Heart left ventricle (tissue), 16 donors: ENCODE measurements at regions of chr1 and their contacts with region 1.

Region 1: GRCh38 chr1:23867953-23868556 is at the start of gene FUCA1:
- DNase-seq: peak; percentile 92 to 95 (median 94)
- ATAC-seq: peak; percentile 95 to 99 (median 99)
- H3K4me3 ChIP-seq: peak within 1 kb of the TSS; percentile 62 to 98 (median 84)
- H3K27ac ChIP-seq: peak within 1 kb of the TSS; percentile 37 to 83 (median 74)
- H3K4me1 ChIP-seq: peaks cover 0 to 48% (median 23%) of the 10 kb centered on the region in 12 donors
- H3K27me3 ChIP-seq: no peaks in the 10 kb centered on the region
- CTCF ChIP-seq: peak; percentile 89 to 99 (median 94)
- POLR2A ChIP-seq: peak in 1 of 2 donors; percentile 82
- total RNA-seq, gene FUCA1: 12.8 to 54.2 (median 16.1) TPM

Region 2: GRCh38 chr1:23772049-23772853 is 95.8 kb before region 1 on chr1:
- intact Hi-C with region 1: loop called in 8 of 10 experiments (anchors 5 to 10 kb)
- DNase-seq: peak; percentile 82 to 91 (median 86)
- ATAC-seq: peak; percentile 29 to 86 (median 82)
- H3K4me3 ChIP-seq: no peak overlapping the region
- H3K27ac ChIP-seq: no peak overlapping the region
- H3K4me1 ChIP-seq: peaks cover 0 to 41% (median 16%) of the 10 kb centered on the region in 12 donors
- H3K27me3 ChIP-seq: no peaks in the 10 kb centered on the region
- CTCF ChIP-seq: peak; percentile 84 to 94 (median 92)
- POLR2A ChIP-seq: no peak

Region 3: DNA sequence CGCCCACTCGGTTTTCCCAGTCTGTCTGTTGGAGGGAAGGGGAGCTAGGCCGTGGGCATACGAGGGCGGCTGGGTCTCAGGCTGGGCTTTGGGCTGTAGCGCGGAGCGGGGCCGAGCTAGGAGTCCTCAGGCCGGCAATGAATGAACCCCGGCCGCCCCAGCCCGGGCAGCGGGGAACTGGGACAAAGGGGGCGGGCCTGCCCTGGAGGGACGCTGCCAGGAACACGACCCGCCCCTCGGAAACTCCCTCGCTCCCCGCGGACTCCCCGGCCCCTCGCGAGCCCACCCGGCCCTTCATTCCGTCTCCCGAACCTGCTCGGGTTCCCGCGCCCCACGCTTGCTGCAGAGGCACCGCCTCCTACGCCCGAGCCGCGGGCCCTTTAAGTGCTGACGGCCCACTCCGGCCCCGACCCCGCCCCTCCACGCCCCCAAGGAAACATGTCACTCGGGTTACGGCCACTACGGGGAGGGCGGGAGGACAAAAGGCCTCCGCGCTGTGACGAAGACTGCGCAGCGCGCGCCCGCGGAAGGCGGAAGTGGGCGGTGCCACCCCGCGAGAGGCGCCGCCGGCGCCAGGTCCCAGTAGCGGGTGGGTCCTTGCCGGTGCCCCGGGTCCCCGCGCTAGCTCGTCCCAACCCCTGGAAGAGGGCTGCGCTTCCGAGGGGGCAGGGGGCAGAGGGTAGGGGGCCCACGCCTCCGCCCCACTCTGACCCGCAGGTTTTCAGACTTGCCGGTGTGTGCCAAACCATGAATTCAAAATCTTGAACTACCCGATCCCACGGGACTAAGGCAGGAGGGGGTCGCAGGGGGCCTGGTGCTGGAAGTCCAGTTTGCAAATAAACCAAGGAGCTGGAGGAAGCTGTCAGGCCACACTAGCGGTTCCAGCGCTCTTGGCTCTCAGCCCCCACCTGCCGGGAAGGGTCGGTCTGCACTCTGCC is 67.4 kb before region 1 on chr1 and contains the start of gene GALE:
- intact Hi-C with region 1: loop called in 2 of 10 experiments (anchors 10 kb)
- DNase-seq: peak; percentile 98 to 99 (median 98)
- ATAC-seq: peak; percentile 95 to 97 (median 96)
- H3K4me3 ChIP-seq: peak within 1 kb of the TSS; percentile 64 to 97 (median 80)
- H3K27ac ChIP-seq: peak within 1 kb of the TSS; percentile 84 to 97 (median 93)
- H3K4me1 ChIP-seq: peaks cover 3 to 23% (median 20%) of the 10 kb centered on the region in 12 donors
- H3K27me3 ChIP-seq: no peaks in the 10 kb centered on the region
- CTCF ChIP-seq: no peak
- POLR2A ChIP-seq: peak in 1 of 2 donors; percentile 80
- total RNA-seq, gene GALE: 6.2 to 13.8 (median 8.9) TPM

Region 4: DNA sequence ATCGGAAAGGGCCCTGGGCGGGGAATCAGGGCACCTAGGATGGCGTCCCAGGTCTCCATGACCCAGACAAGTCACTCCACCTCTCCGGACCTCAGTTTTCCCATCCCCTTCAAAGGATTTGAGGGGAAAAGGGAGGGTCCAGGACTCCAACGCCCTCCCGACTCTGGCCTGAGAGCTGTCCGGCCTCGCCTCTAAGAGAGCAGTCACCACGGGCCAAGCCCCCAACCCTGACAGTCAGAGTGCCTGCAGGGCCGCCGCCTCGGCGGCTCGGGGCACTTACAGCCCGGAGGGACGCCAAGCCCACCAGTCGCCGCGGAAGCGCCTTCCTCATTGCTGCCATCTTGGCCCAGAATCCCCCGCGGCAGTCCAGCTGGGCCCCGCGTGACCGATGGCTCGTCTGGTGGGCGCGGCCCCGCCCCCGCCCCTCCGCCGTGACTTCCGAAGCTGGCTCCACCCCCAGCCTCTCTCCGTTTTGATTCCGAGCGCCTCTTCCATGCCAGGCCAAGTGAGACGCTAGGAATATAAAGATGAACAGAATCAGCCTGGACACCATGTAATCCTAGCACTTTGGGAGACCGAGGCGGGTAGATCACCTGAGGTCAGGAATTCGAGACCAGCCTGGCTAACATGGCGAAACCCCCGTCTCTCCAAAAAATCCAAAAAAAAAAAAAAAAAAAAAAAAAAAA is 42.8 kb before region 1 on chr1 and contains the start of gene HMGCL:
- intact Hi-C with region 1: loop called in 5 of 10 experiments (anchors 5 kb)
- DNase-seq: peak; percentile 93 to 95 (median 93)
- ATAC-seq: peak; percentile 96 to 100 (median 99)
- H3K4me3 ChIP-seq: peak within 1 kb of the TSS; percentile 74 to 100 (median 97)
- H3K27ac ChIP-seq: peak within 1 kb of the TSS; percentile 89 to 98 (median 96)
- H3K4me1 ChIP-seq: peaks cover 0 to 18% (median 10%) of the 10 kb centered on the region in 12 donors
- H3K27me3 ChIP-seq: no peaks in the 10 kb centered on the region
- CTCF ChIP-seq: peak in 1 of 12 donors; percentile 7
- POLR2A ChIP-seq: peak in 1 of 2 donors; percentile 85
- total RNA-seq, gene HMGCL: 22.0 to 44.3 (median 41.1) TPM

Region 5: DNA sequence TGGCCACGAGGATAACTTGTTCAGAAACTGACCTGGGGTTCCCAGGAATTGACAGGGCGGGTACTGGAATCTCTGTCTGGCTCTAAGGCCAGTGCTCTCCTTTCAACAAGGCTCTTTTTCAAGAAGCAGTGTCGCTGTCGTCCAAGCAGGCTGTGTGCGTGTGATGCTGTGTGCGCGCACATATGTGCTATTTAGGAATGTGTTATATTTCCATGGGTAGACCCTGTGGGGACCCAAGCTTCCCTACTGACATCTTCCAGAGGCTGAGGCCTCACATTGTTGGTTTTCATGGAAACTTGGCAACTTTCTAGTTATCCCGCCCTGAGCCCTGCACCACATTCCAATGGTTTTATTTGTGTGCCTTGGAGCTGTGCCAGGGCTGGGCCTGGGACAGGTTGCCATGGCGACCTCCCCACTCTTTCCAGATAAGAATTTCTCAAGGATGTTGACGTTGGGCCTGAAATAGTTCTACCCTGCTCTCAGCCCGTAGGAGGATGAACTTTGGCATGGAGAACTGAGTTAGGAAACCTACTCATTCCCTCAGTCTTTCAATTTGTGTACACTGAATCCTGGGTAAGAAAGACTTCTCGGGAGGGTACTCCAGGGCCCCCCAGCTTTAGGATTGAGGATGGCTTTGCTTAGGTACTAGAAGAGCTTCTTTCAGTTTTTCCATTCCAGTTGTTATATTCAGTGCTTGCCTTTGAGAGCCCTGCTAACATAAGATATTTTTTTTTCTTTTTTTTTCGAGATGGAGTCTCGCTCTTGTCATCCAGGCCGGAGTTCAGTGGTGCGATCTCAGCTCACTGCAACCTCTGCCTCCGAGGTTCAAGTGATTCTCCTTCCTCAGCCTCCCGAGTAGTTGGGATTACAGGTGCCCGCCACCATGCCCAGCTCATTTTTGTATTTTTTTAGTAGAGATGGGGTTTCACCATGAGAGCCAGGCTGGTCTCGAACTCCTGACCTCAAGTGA is 150.8 kb after region 1 on chr1:
- intact Hi-C with region 1: loop called in 1 of 10 experiments (anchors 5 kb)
- DNase-seq: peak; percentile 94 to 98 (median 97)
- ATAC-seq: peak; percentile 87 to 90 (median 88)
- H3K4me3 ChIP-seq: peak overlapping the region in 4 of 12 donors; percentile 1 to 29 (median 24)
- H3K27ac ChIP-seq: peak overlapping the region; percentile 78 to 95 (median 90)
- H3K4me1 ChIP-seq: peaks cover 3 to 85% (median 59%) of the 10 kb centered on the region in 12 donors
- H3K27me3 ChIP-seq: no peaks in the 10 kb centered on the region
- CTCF ChIP-seq: peak in 1 of 12 donors; percentile 5
- POLR2A ChIP-seq: peak in 1 of 2 donors; percentile 30

Region 6: DNA sequence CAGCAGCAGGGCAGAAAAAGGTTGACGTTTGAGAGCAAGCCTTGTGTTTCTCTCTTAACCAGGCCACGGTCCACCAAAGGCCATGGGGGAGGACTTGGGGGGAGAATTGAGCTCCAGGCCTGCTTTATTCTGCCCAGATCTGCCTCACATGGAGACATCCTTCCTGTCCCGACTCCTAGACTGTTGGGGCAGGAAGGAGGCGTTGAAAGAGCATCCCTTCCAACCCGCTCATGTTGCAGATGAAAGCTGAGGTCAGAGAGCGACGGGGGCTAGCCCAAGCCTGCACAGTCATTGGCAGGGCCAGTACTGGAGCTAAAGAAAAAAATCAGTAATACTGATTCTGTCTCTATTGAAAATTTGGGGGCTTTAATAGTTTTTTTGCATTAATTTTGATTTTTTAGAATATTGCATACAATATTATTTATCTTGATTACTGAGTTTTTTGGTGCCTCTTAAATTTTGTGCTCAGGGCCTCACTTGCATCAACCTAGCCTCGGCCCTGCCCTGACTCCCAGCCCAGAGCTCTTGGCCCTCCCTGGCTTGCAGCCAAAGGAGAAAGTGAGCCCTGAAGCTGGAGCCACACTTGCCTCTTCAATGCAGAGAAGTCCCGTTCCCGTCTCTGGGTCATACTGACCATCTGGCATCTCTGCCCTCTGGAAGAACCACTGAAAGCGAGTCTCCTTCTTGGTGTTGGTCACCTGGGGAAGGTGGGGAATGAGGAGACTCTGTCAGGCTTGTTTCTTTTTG is 197.4 kb after region 1 on chr1:
- intact Hi-C with region 1: no loop called
- DNase-seq: peak in 1 of 5 donors; percentile 6
- ATAC-seq: no peak
- H3K4me3 ChIP-seq: no peak overlapping the region
- H3K27ac ChIP-seq: peak overlapping the region in 6 of 12 donors; percentile 10 to 86 (median 80)
- H3K4me1 ChIP-seq: peaks cover 0 to 18% (median 5%) of the 10 kb centered on the region in 12 donors
- H3K27me3 ChIP-seq: no peaks in the 10 kb centered on the region
- CTCF ChIP-seq: no peak
- POLR2A ChIP-seq: no peak